ENCODE measurements at regions of chr1 and their contacts with region 1.

Region 1: GRCh38 chr1:150072959-150073358 is 5.4 kb downstream of the VPS45 start:
- DNase-seq: peak; percentile 54
- H3K4me3 ChIP-seq: no peak overlapping the region
- H3K27ac ChIP-seq: no peak overlapping the region
- H3K4me1 ChIP-seq: peaks cover 11% of the 10 kb centered on the region
- H3K27me3 ChIP-seq: no peaks in the 10 kb centered on the region
- CTCF ChIP-seq: peak; percentile 69

Region 2: DNA sequence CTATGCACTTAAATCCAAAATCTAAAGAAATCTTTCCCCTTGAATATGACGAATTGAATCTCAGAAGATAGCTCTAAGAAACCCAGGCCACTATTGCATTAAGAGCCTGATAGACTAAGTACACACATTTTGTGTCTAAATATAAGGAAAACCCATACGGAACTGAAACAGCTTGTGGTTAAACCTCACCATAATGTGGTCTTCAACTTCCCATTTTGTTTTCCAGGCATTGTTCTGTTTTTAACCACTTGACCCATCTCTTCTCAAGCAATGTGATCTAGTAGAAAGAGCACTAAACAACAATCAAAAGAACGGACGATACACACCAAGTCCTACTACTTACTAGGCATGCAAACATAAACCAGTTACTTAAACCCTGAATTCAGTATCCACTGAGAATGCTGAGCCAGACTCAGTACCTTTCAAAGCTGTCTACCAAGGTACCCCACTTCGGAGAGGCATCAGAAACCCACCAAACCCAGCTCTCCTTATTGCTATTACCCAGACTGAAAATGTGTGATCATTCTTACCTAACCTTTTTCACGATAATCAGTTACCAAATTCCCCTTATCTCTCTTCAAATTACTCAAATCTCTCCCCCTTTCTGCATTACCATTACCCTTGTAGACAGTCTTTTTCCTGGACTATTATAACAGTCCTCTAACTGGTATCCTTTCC is 75.2 kb before region 1 on chr1:
- CTCF ChIA-PET with region 1: no interaction called
- POLR2A ChIA-PET with region 1: no interaction called
- intact Hi-C with region 1: no loop called
- DNase-seq: no peak
- H3K4me3 ChIP-seq: no peak overlapping the region
- H3K27ac ChIP-seq: no peak overlapping the region
- H3K4me1 ChIP-seq: no peaks in the 10 kb centered on the region
- H3K27me3 ChIP-seq: no peaks in the 10 kb centered on the region
- CTCF ChIP-seq: no peak

Region 3: DNA sequence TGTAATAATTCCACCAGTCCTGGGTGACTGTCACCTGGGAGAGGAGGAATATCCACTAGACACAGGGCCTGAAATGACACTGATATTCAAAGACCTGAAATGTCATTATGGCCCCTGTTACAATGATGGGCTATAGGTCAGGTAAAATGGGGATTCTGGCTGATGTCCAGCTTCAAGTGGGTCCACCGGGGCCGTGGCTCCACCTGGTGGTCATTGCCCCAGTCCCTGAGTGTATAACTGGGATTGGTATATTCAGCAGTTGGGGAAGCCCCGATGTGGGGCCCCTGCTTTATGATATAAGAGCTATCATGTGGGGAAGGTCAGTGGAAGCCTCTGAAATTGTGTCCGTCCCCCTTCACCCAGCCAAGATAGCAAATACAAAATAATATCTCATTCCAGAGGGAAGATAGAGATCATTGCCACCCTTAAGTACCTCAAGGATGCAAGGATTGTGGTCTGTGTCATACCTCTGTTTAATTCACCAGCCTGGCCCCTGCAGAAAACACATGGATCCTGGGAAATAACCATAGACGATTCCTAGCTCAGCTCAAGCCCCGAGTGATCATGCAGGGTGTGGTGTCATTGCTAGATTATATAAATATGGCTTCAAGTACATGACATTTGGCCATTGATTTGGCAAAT is 96.1 kb after region 1 on chr1:
- CTCF ChIA-PET with region 1: interaction called, 20 read pairs
- POLR2A ChIA-PET with region 1: interaction called, 4 read pairs
- intact Hi-C with region 1: loop called (anchors 1 kb)
- DNase-seq: peak; percentile 61
- H3K4me3 ChIP-seq: no peak overlapping the region
- H3K27ac ChIP-seq: no peak overlapping the region
- H3K4me1 ChIP-seq: no peaks in the 10 kb centered on the region
- H3K27me3 ChIP-seq: no peaks in the 10 kb centered on the region
- CTCF ChIP-seq: peak; percentile 79

Region 4: GRCh38 chr1:150186789-150187559 is 114.0 kb after region 1 on chr1:
- CTCF ChIA-PET with region 1: interaction called, 32 read pairs
- POLR2A ChIA-PET with region 1: no interaction called
- intact Hi-C with region 1: loop called (anchors 5 kb)
- DNase-seq: peak; percentile 79
- H3K4me3 ChIP-seq: no peak overlapping the region
- H3K27ac ChIP-seq: no peak overlapping the region
- H3K4me1 ChIP-seq: peaks cover 12% of the 10 kb centered on the region
- H3K27me3 ChIP-seq: no peaks in the 10 kb centered on the region
- CTCF ChIP-seq: peak; percentile 71

Region 5: DNA sequence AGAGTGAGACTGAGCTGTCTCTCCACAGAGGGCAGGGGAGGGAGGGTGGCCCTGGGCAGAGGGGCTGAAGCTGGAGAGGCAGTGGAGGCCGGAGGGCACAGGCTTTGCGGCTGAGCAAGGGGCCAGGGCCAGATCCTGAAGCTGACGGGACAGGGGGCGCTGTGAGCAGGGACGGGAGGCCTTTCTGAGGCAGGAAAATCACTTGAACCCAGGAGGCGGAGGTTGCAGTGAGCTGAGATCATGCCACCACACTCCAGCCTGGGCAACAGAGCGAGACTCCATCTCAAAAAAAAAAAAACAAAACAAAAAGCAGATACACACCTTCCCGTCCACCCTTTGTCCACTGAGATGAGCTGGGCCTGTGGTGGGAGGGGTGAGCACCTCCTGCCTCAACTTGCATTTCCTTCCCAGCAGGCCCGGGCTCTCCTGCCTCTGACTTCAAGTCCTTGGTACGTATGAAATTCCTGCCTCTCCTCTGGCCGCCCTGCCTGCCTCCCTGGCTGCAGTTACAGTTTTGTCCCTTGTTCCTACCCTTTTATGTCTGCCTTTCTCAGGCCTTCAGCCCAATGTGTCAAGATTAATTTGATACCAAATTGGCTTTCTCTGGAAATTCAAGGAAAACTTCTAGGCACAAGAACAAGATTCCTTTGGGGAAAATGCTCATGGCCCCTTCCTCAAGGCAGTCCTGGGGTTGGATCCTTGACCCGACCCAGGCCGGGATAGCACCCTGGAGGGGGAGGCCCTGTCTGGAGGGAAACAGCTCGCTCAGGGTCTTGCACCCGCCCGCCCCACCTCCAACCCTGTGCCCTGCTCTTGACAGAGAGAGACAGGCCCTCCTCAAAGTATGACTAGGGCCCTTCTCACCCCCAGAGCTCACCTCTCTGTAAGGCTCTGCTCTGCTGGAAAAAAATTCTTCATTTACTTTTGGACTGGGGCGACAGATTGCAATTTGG is 465.0 kb after region 1 on chr1:
- CTCF ChIA-PET with region 1: no interaction called
- POLR2A ChIA-PET with region 1: no interaction called
- intact Hi-C with region 1: no loop called
- DNase-seq: no peak
- H3K4me3 ChIP-seq: no peak overlapping the region
- H3K27ac ChIP-seq: no peak overlapping the region
- H3K4me1 ChIP-seq: no peaks in the 10 kb centered on the region
- H3K27me3 ChIP-seq: no peaks in the 10 kb centered on the region
- CTCF ChIP-seq: no peak

Measured in A673 (cell line).